ENCODE measurements at regions of chr10 and their contacts with region 1.

Region 1: DNA sequence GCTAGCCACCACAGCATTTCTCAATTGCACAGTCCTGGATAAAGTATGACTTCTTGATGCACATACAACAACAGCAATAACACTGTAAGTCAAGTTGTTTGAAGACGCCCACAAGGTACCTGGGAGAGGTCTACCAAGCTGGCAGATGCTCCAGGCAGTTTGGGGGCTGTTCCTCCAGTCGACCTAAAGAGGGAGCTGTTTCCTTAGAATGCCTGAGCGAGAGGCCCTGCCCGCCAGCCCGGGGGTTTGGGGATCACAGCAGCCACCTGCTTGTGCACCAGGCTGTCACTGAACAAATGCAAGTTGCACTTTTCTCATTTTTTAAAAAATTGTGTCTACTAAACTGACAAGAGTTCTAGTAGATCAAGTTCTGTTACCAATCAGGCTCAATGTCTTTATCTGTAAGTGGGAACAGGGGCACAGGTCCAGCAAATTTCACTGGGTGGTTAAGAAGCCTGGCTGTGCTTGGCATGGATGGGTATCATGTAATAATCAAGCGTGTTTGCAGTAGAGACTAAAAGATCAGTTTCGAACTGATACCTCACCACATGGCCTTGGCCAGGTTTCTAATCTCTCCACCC is 193.8 kb upstream of the ADO start:
- DNase-seq: no peak
- ATAC-seq: peak; percentile 90
- H3K4me3 ChIP-seq: no peak overlapping the region
- H3K27ac ChIP-seq: no peak overlapping the region
- H3K4me1 ChIP-seq: peaks cover 30% of the 10 kb centered on the region
- H3K27me3 ChIP-seq: no peaks in the 10 kb centered on the region
- CTCF ChIP-seq: peak; percentile 90 to 99 (median 96)
- EP300 ChIP-seq: 0 out of 4 replicates have a peak, but pooled peaks have one; percentile 7 to 30
- POLR2A ChIP-seq: no peak
- RAD21 ChIP-seq: peak; percentile 99

Region 2: DNA sequence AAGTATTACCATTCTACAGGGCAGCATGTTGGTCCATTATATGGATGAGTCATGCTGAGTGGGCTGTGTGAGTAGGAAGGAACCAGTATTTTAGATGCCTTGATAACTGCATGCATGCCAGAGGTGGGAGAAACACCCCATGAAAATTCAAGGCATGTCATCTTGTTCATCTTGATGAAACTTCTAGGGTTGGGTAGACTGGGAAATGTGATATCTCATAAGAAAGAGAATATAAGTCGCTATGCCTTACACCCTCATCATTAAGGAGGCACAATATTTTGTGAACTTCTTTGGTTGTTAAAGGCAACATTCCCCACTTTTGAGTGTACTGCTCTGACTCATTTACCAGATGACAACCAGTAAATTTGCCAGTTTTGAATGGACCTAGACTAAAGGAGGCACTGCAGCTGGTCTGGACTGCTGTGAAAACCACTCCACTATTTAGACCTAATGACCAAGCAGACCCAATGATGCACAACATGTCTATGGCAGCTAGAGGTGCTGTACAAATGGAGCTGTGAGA is 188.6 kb before region 1 on chr10:
- CTCF ChIA-PET with region 1: no interaction called
- POLR2A ChIA-PET with region 1: no interaction called
- RAD21 ChIA-PET with region 1: no interaction called
- SMC1A ChIA-PET with region 1: no interaction called
- in situ Hi-C with region 1: no loop called
- intact Hi-C with region 1: no loop called
- DNase-seq: no peak
- ATAC-seq: no peak
- H3K4me3 ChIP-seq: no peak overlapping the region
- H3K27ac ChIP-seq: no peak overlapping the region
- H3K4me1 ChIP-seq: no peaks in the 10 kb centered on the region
- H3K27me3 ChIP-seq: no peaks in the 10 kb centered on the region
- CTCF ChIP-seq: no peak
- EP300 ChIP-seq: no peak
- POLR2A ChIP-seq: no peak
- RAD21 ChIP-seq: no peak

Region 3: DNA sequence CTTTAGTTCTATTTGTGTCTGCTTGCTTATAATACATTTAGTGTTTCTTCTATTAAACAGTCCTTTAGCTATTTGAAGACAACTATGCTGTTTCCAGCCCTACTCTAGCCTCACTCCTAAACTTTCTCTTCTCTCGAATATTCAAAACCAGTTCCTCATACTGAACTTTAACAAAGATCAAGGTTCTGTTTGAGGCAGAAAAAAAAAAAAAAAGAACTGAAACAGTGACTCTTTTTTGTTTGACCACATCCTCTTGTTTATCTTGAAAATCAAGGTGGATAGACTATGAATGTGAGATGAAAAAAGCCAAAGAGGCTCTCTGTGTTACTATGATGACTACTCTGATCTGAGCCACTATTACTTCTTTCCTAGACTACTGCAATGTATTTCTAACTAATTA is 82.3 kb before region 1 on chr10:
- CTCF ChIA-PET with region 1: interaction called, 10 read pairs
- POLR2A ChIA-PET with region 1: no interaction called
- RAD21 ChIA-PET with region 1: interaction called, 13 read pairs
- SMC1A ChIA-PET with region 1: interaction called, 5 read pairs
- in situ Hi-C with region 1: no loop called
- intact Hi-C with region 1: no loop called
- DNase-seq: peak; percentile 79
- ATAC-seq: peak; percentile 91
- H3K4me3 ChIP-seq: no peak overlapping the region
- H3K27ac ChIP-seq: peak overlapping the region; percentile 91
- H3K4me1 ChIP-seq: peaks cover 32% of the 10 kb centered on the region
- H3K27me3 ChIP-seq: no peaks in the 10 kb centered on the region
- CTCF ChIP-seq: no peak
- EP300 ChIP-seq: peak; percentile 81 to 89
- POLR2A ChIP-seq: no peak
- RAD21 ChIP-seq: peak; percentile 23; the same call in 1 of the 2 replicates

Region 4: GRCh38 chr10:62632071-62632809 is 21.5 kb after region 1 on chr10:
- CTCF ChIA-PET with region 1: interaction called, 21 read pairs
- POLR2A ChIA-PET with region 1: interaction called, 5 read pairs
- RAD21 ChIA-PET with region 1: interaction called, 11 read pairs
- SMC1A ChIA-PET with region 1: interaction called, 122 read pairs
- in situ Hi-C with region 1: no loop called
- intact Hi-C with region 1: no loop called
- DNase-seq: peak; percentile 80
- ATAC-seq: peak; percentile 85
- H3K4me3 ChIP-seq: 0 out of 2 replicates have a peak overlapping the region, but pooled peaks have one; percentile 1
- H3K27ac ChIP-seq: peak overlapping the region; percentile 71
- H3K4me1 ChIP-seq: peaks cover 56% of the 10 kb centered on the region
- H3K27me3 ChIP-seq: no peaks in the 10 kb centered on the region
- CTCF ChIP-seq: no peak
- EP300 ChIP-seq: peak; percentile 75 to 94
- POLR2A ChIP-seq: no peak
- RAD21 ChIP-seq: peak; percentile 29; the same call in 1 of the 2 replicates

Region 5: GRCh38 chr10:62653254-62653653 is 42.5 kb after region 1 on chr10:
- CTCF ChIA-PET with region 1: interaction called, 6 read pairs
- POLR2A ChIA-PET with region 1: no interaction called
- RAD21 ChIA-PET with region 1: interaction called, 39 read pairs
- SMC1A ChIA-PET with region 1: interaction called, 16 read pairs
- in situ Hi-C with region 1: no loop called
- intact Hi-C with region 1: loop called (anchors 1 kb)
- DNase-seq: peak; percentile 97
- ATAC-seq: peak; percentile 85
- H3K4me3 ChIP-seq: no peak overlapping the region
- H3K27ac ChIP-seq: peak overlapping the region; percentile 90
- H3K4me1 ChIP-seq: peaks cover 50% of the 10 kb centered on the region
- H3K27me3 ChIP-seq: no peaks in the 10 kb centered on the region
- CTCF ChIP-seq: no peak
- EP300 ChIP-seq: peak; percentile 99
- POLR2A ChIP-seq: no peak
- RAD21 ChIP-seq: peak; percentile 45; the same call in 1 of the 2 replicates

Region 6: GRCh38 chr10:62760401-62760800 is 149.7 kb after region 1 on chr10:
- CTCF ChIA-PET with region 1: interaction called, 14 read pairs
- POLR2A ChIA-PET with region 1: no interaction called
- RAD21 ChIA-PET with region 1: no interaction called
- SMC1A ChIA-PET with region 1: interaction called, 5 read pairs
- in situ Hi-C with region 1: no loop called
- intact Hi-C with region 1: no loop called
- DNase-seq: no peak
- ATAC-seq: no peak
- H3K4me3 ChIP-seq: no peak overlapping the region
- H3K27ac ChIP-seq: no peak overlapping the region
- H3K4me1 ChIP-seq: peaks cover 10% of the 10 kb centered on the region
- H3K27me3 ChIP-seq: no peaks in the 10 kb centered on the region
- CTCF ChIP-seq: no peak
- EP300 ChIP-seq: no peak
- POLR2A ChIP-seq: no peak
- RAD21 ChIP-seq: no peak

Region 7: GRCh38 chr10:62804356-62805230 is 193.9 kb after region 1 on chr10 and contains the start of gene ADO:
- CTCF ChIA-PET with region 1: interaction called, 25 read pairs
- POLR2A ChIA-PET with region 1: no interaction called
- RAD21 ChIA-PET with region 1: interaction called, 39 read pairs
- SMC1A ChIA-PET with region 1: interaction called, 17 read pairs
- in situ Hi-C with region 1: no loop called
- intact Hi-C with region 1: no loop called
- DNase-seq: peak; percentile 59
- ATAC-seq: peak; percentile 83
- H3K4me3 ChIP-seq: peak within 1 kb of the TSS; percentile 88
- H3K27ac ChIP-seq: peak within 1 kb of the TSS; percentile 98
- H3K4me1 ChIP-seq: peaks cover 4% of the 10 kb centered on the region; the same call in 1 of the 2 replicates
- H3K27me3 ChIP-seq: no peaks in the 10 kb centered on the region
- CTCF ChIP-seq: no peak
- EP300 ChIP-seq: peak in 1 of 2 experiments; percentile 26; a peak in 1 of 4 replicates
- POLR2A ChIP-seq: peak; percentile 89
- RAD21 ChIP-seq: 0 out of 2 replicates have a peak, but pooled peaks have one; percentile 6
- polyA plus RNA-seq, gene ADO: 4.3 to 8.5 TPM

Region 8: GRCh38 chr10:63083904-63084689 is 473.4 kb after region 1 on chr10:
- CTCF ChIA-PET with region 1: interaction called, 50 read pairs
- POLR2A ChIA-PET with region 1: no interaction called
- RAD21 ChIA-PET with region 1: interaction called, 22 read pairs
- SMC1A ChIA-PET with region 1: interaction called, 25 read pairs
- in situ Hi-C with region 1: no loop called
- intact Hi-C with region 1: loop called (anchors 2 kb)
- DNase-seq: peak; percentile 38
- ATAC-seq: peak; percentile 94
- H3K4me3 ChIP-seq: no peak overlapping the region
- H3K27ac ChIP-seq: no peak overlapping the region
- H3K4me1 ChIP-seq: no peaks in the 10 kb centered on the region
- H3K27me3 ChIP-seq: no peaks in the 10 kb centered on the region; a peak in 1 of 4 replicates
- CTCF ChIP-seq: peak; percentile 63 to 84 (median 76)
- EP300 ChIP-seq: no peak
- POLR2A ChIP-seq: no peak
- RAD21 ChIP-seq: peak; percentile 99